PC-9 (cell line): ENCODE measurements at regions of chr2 and their contacts with region 1.

Region 1: GRCh38 chr2:32772638-32773447 is 145.0 kb downstream of the TTC27 start:
- DNase-seq: peak; percentile 5 to 49
- H3K4me3 ChIP-seq: no peak overlapping the region
- H3K27ac ChIP-seq: no peak overlapping the region
- H3K4me1 ChIP-seq: no peaks in the 10 kb centered on the region
- H3K27me3 ChIP-seq: no peaks in the 10 kb centered on the region
- CTCF ChIP-seq: peak; percentile 94

Region 2: DNA sequence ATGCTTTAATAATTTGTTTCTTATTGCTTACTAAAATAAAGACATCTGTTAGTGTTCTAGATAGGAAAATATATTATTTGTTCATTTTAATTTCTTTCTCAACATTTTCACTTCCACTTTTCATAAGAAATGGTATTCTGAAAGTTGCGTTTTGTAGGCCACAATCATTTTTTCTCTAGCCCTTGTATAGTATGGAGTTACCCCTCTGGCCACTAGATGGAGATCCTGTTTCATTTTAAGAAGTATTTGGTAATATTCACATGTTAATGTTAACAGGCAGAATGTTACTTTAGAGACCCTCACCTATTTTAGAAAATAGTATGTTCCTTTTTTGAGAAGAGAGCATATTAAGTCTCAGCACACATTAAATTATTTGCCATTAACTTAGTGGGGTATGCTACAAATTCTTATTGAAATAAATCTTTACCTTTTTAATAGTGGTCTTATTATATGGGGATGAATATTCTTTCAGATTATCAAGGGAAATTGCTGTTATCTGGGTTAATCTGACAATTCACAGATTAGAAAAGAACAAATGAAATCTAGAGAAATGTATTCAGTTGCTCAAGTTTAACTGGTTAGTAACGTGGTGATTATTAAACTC is 218.9 kb before region 1 on chr2:
- CTCF ChIA-PET with region 1: no interaction called
- POLR2A ChIA-PET with region 1: no interaction called
- intact Hi-C with region 1: loop called (anchors 10 kb)
- DNase-seq: no peak
- H3K4me3 ChIP-seq: no peak overlapping the region
- H3K27ac ChIP-seq: no peak overlapping the region
- H3K4me1 ChIP-seq: no peaks in the 10 kb centered on the region
- H3K27me3 ChIP-seq: no peaks in the 10 kb centered on the region
- CTCF ChIP-seq: peak; percentile 85

Region 3: GRCh38 chr2:33013684-33014110 is 240.9 kb after region 1 on chr2:
- CTCF ChIA-PET with region 1: interaction called, 10 read pairs
- POLR2A ChIA-PET with region 1: no interaction called
- intact Hi-C with region 1: no loop called
- DNase-seq: peak in 1 of 2 experiments; percentile 57
- H3K4me3 ChIP-seq: no peak overlapping the region
- H3K27ac ChIP-seq: peak overlapping the region; percentile 27; the same call in 1 of the 2 replicates
- H3K4me1 ChIP-seq: peaks cover 57% of the 10 kb centered on the region
- H3K27me3 ChIP-seq: no peaks in the 10 kb centered on the region
- CTCF ChIP-seq: no peak

Region 4: DNA sequence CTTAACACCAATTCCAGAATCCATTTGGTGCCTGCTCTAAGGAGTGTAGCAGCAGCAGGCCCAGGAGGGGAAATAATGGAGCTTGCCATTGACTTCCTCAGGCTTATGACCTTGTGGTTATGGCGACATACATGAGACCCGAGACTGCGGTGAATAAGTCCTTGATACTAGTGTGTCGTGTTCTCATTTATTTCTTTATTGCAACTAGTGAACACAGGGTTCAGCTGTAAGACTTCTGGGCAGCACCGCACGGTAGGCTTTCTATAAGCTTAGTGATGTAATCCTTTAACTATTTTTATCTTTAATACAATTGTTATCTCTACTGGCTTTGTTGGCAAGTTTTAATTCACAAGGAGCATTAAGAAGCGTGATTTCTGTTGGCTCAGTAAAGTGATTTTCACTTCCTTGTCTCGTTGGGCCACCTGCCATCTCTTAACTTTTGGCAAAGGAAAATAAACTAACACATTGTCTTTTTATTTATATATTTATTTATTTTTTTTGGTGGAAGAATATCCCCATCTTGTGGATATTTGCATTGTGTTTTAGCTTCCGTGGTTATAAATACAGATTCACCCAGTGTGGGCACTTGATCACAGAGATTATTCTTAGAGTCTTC is 313.7 kb after region 1 on chr2:
- CTCF ChIA-PET with region 1: no interaction called
- POLR2A ChIA-PET with region 1: no interaction called
- intact Hi-C with region 1: loop called (anchors 2 kb)
- DNase-seq: no peak
- H3K4me3 ChIP-seq: no peak overlapping the region
- H3K27ac ChIP-seq: no peak overlapping the region
- H3K4me1 ChIP-seq: no peaks in the 10 kb centered on the region
- H3K27me3 ChIP-seq: no peaks in the 10 kb centered on the region
- CTCF ChIP-seq: no peak

Region 5: GRCh38 chr2:33372940-33373553 is 600.2 kb after region 1 on chr2:
- CTCF ChIA-PET with region 1: no interaction called
- POLR2A ChIA-PET with region 1: no interaction called
- intact Hi-C with region 1: loop called (anchors 2 kb)
- DNase-seq: peak in 1 of 2 experiments; percentile 14
- H3K4me3 ChIP-seq: no peak overlapping the region
- H3K27ac ChIP-seq: no peak overlapping the region
- H3K4me1 ChIP-seq: no peaks in the 10 kb centered on the region
- H3K27me3 ChIP-seq: no peaks in the 10 kb centered on the region
- CTCF ChIP-seq: peak; percentile 95

Region 6: GRCh38 chr2:33441235-33441810 is 668.5 kb after region 1 on chr2:
- CTCF ChIA-PET with region 1: no interaction called
- POLR2A ChIA-PET with region 1: no interaction called
- intact Hi-C with region 1: loop called (anchors 1 kb)
- DNase-seq: peak in 1 of 2 experiments; percentile 37
- H3K4me3 ChIP-seq: no peak overlapping the region
- H3K27ac ChIP-seq: no peak overlapping the region
- H3K4me1 ChIP-seq: no peaks in the 10 kb centered on the region
- H3K27me3 ChIP-seq: no peaks in the 10 kb centered on the region
- CTCF ChIP-seq: peak; percentile 77